ENCODE measurements at regions of chr22 and their contacts with region 1.

Region 1: GRCh38 chr22:45905924-45906865 is 70.8 kb downstream of the WNT7B start:
- DNase-seq: peak; percentile 21
- H3K4me3 ChIP-seq: no peak overlapping the region
- H3K27me3 ChIP-seq: peaks cover 9% of the 10 kb centered on the region
- CTCF ChIP-seq: 0 out of 2 replicates have a peak, but pooled peaks have one; percentile 27

Region 2: DNA sequence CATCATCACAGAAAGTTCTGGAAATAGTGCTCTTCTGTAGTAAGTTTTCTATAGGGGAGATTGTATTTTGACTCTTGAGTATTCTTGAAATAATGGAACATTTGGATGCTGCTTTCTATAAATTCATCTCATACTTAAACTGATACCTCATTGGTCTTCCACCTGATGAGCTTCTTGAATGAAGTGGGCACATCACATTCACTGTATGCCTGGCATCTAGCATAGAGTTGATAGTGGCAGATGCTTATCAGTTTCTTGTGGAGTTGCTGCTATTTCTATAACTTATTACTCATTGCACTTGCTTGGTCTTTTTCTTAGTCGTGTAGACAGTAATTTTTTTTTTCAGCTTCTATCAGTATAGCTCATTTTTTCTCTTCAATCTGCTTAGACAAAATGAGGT is 229.1 kb before region 1 on chr22:
- CTCF ChIA-PET with region 1: no interaction called
- POLR2A ChIA-PET with region 1: interaction called, 12 read pairs
- DNase-seq: no peak
- H3K4me3 ChIP-seq: no peak overlapping the region
- H3K27me3 ChIP-seq: no peaks in the 10 kb centered on the region
- CTCF ChIP-seq: no peak

Region 3: DNA sequence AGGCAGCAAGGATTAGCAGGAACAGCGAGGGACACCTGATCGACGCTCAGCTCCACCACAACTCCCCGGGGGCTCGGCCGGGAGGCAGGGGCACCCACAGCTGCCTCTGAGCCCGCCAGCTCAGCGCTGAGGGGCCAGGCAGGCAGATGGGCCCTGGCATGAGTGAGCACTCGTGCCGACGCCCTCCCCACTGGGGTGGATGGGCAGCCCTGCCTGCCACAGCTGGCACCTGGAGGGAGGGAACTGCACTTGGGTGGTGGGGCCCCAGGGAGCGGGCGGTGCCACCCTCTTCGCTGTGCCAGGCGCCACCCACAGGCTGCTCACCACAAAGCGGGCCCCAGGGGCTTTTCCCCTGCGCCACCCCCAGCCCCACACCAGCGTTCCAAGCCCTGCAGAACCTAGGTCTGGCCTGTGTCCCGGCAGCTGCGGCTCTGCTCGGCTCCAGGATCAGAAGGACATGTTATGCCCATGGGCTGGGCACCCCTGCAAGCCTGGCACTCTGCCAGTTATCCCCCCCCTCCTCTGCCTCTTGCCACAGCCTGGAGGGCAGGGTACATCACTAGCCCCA is 42.0 kb after region 1 on chr22:
- CTCF ChIA-PET with region 1: no interaction called
- POLR2A ChIA-PET with region 1: no interaction called
- DNase-seq: no peak
- H3K4me3 ChIP-seq: no peak overlapping the region
- H3K27me3 ChIP-seq: peaks cover 13% of the 10 kb centered on the region
- CTCF ChIP-seq: no peak